GM12878 (cell line): ENCODE measurements at regions of chr1 and their contacts with region 1.

Region 1: DNA sequence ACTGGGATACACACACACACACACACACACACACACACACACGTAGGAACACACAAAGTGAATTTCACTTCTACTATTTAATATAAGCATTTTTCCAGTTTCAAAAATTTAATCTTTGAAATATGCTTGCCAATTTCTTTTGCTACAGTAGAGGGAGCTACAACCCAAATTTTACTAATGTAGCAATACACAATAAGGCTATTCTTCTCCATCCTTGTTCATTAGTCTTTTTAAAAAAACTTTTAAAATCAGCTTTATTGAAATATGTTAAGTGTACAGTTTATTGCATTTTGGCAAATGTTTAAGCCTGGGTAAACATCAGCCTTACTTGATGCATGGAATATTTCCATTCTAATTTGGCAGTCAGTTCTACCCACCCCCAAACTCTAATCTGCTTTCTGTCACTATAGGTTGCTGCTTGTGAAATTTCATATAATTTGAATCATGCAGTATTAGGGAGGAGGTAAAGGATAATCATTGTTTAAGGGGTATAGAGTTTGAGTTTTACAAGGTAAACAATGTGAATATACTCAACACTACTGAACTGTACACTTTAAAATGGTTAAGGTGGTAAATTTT is 93.0 kb upstream of the TENT5C start:
- DNase-seq: no peak
- ATAC-seq: peak; percentile 41; the same call in 1 of the 3 replicates
- H3K4me3 ChIP-seq: no peak overlapping the region
- H3K27ac ChIP-seq: no peak overlapping the region
- H3K4me1 ChIP-seq: no peaks in the 10 kb centered on the region
- H3K27me3 ChIP-seq: no peaks in the 10 kb centered on the region
- CTCF ChIP-seq: peak; percentile 42 to 66 (median 48); a peak in 5 of 6 replicates
- EP300 ChIP-seq: no peak
- POLR2A ChIP-seq: no peak
- RAD21 ChIP-seq: peak; percentile 66

Region 2: GRCh38 chr1:117339866-117340700 is 172.7 kb before region 1 on chr1:
- CTCF ChIA-PET with region 1: interaction called, 3 read pairs
- POLR2A ChIA-PET with region 1: no interaction called
- RAD21 ChIA-PET with region 1: interaction called, 3 read pairs
- SMC1A ChIA-PET with region 1: interaction called, 10 read pairs
- in situ Hi-C with region 1: no loop called
- intact Hi-C with region 1: no loop called
- DNase-seq: no peak
- ATAC-seq: peak; percentile 68; the same call in 2 of the 3 replicates
- H3K4me3 ChIP-seq: no peak overlapping the region
- H3K27ac ChIP-seq: no peak overlapping the region
- H3K4me1 ChIP-seq: no peaks in the 10 kb centered on the region
- H3K27me3 ChIP-seq: no peaks in the 10 kb centered on the region; a peak in 1 of 4 replicates
- CTCF ChIP-seq: no peak
- EP300 ChIP-seq: no peak
- POLR2A ChIP-seq: no peak
- RAD21 ChIP-seq: no peak

Region 3: GRCh38 chr1:117501281-117501680 is 11.6 kb before region 1 on chr1:
- CTCF ChIA-PET with region 1: interaction called, 13 read pairs
- POLR2A ChIA-PET with region 1: no interaction called
- RAD21 ChIA-PET with region 1: no interaction called
- SMC1A ChIA-PET with region 1: interaction called, 15 read pairs
- in situ Hi-C with region 1: no loop called
- intact Hi-C with region 1: no loop called
- DNase-seq: no peak
- ATAC-seq: no peak
- H3K4me3 ChIP-seq: no peak overlapping the region
- H3K27ac ChIP-seq: no peak overlapping the region
- H3K4me1 ChIP-seq: no peaks in the 10 kb centered on the region
- H3K27me3 ChIP-seq: no peaks in the 10 kb centered on the region
- CTCF ChIP-seq: no peak
- EP300 ChIP-seq: no peak
- POLR2A ChIP-seq: no peak
- RAD21 ChIP-seq: no peak

Region 4: GRCh38 chr1:117674521-117675397 is 161.9 kb after region 1 on chr1:
- CTCF ChIA-PET with region 1: interaction called, 25 read pairs
- POLR2A ChIA-PET with region 1: no interaction called
- RAD21 ChIA-PET with region 1: interaction called, 6 read pairs
- SMC1A ChIA-PET with region 1: no interaction called
- in situ Hi-C with region 1: no loop called
- intact Hi-C with region 1: no loop called
- DNase-seq: no peak
- ATAC-seq: peak; percentile 80
- H3K4me3 ChIP-seq: no peak overlapping the region
- H3K27ac ChIP-seq: no peak overlapping the region
- H3K4me1 ChIP-seq: peaks cover 12% of the 10 kb centered on the region
- H3K27me3 ChIP-seq: peaks cover 8 to 10% of the 10 kb centered on the region in 2 experiments
- CTCF ChIP-seq: peak; percentile 70 to 74 (median 74); a peak in 5 of 6 replicates
- EP300 ChIP-seq: no peak
- POLR2A ChIP-seq: no peak
- RAD21 ChIP-seq: peak; percentile 86